Activated naive CD4-positive, alpha-beta T cell treated with anti-CD3 and anti-CD28 coated beads, Interleukin-2, amount 10 ng/mL, durations not matched to agents 7 days and 5 days (primary cell): ENCODE measurements at regions of chr14 and their contacts with region 1.

Region 1: GRCh38 chr14:104078031-104078455 is 7.5 kb upstream of the ASPG start:
- DNase-seq: peak; percentile 92
- H3K4me3 Mint-ChIP-seq: no peak overlapping the region
- H3K27ac Mint-ChIP-seq: peak overlapping the region; percentile 26
- H3K4me1 Mint-ChIP-seq: peaks cover 20% of the 10 kb centered on the region
- H3K27me3 Mint-ChIP-seq: peaks cover 12% of the 10 kb centered on the region

Region 2: DNA sequence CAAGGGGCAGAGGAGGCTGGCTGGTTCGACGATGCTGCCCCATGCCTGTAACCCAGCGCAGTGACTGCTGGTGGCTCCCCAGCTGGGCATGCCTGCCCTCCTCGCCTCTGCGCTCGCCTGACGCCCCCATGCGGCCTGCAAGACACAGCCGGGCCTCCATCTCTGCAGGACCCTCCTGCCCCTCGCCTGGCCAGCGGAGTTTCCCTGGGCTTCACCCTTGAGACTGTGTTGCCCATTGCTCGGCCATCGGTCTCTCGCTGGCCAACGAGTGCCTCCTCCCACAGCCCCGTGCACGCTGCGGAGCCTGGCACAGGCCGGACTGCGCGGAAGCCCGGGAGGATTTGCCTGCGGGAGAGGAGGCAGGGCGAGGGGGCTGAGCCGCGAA is 25.0 kb after region 1 on chr14:
- CTCF ChIA-PET with region 1: no interaction called
- DNase-seq: peak; percentile 16
- H3K4me3 Mint-ChIP-seq: no peak overlapping the region
- H3K27ac Mint-ChIP-seq: no peak overlapping the region
- H3K4me1 Mint-ChIP-seq: no peaks in the 10 kb centered on the region
- H3K27me3 Mint-ChIP-seq: no peaks in the 10 kb centered on the region

Region 3: DNA sequence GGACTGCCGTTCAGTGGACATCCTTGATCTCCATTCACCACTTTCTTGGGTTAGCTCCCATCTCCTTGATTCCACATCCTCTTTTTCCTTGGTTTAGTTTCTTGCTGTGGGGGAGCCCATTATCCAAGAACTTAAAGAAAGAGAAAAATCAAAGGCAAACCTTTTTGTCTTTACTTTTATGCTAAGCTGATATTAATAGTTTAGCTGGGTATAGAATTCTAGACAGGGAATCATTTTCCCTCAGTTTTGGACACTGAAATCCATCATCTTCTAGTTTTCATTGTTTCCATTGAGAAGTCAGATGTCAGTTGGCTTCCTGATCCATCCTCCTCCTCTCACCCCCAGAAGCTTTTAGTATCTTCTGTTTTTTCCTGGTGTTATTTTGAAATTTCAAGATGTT is 51.5 kb after region 1 on chr14:
- CTCF ChIA-PET with region 1: interaction called, 10 read pairs
- DNase-seq: no peak
- H3K4me3 Mint-ChIP-seq: no peak overlapping the region
- H3K27ac Mint-ChIP-seq: no peak overlapping the region
- H3K4me1 Mint-ChIP-seq: no peaks in the 10 kb centered on the region
- H3K27me3 Mint-ChIP-seq: peaks cover 39% of the 10 kb centered on the region